CD8-positive, alpha-beta memory T cell (primary cell): ENCODE measurements at regions of chr9 and their contacts with region 1.

Region 1: DNA sequence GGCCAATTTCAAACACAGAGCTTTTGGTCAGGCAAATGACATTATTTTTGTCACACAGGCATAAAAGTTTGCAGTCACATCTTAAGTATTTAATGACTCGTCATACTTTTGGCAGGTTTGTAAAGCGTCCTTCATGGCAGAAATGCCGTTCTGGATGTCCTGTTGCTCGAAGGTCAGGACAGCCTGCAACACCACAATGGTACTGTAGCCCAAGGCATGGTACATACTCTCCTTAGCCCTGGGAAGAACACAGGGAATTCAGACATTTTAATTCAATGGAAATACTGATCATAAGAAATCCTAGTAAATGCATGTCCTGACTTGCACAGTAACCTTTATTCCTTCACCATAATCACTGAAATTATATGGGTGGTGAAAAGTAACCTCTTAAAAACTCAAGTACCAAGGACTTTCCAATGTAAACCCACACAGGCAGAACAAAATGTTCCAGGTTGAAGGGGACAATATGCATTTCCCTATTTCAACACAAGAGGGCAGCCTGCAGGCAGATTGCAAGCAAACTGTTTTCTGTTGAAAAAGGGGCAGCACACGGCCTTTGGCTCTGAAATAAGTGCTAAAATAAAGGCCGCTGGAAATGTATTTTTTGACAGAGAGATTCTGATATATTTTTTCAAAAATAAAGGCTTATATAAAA is 95.7 kb downstream of the TTC39B start:
- DNase-seq: peak; percentile 32 to 65 (median 43)
- H3K4me3 ChIP-seq: no peak overlapping the region
- H3K4me3 Mint-ChIP-seq: no peak overlapping the region
- H3K27ac ChIP-seq: no peak overlapping the region
- H3K27ac Mint-ChIP-seq: no peak overlapping the region
- H3K4me1 ChIP-seq: no peaks in the 10 kb centered on the region
- H3K4me1 Mint-ChIP-seq: peaks cover 7 to 19% (median 16%) of the 10 kb centered on the region in 3 donors
- H3K27me3 ChIP-seq: no peaks in the 10 kb centered on the region
- H3K27me3 Mint-ChIP-seq: no peaks in the 10 kb centered on the region

Region 2: DNA sequence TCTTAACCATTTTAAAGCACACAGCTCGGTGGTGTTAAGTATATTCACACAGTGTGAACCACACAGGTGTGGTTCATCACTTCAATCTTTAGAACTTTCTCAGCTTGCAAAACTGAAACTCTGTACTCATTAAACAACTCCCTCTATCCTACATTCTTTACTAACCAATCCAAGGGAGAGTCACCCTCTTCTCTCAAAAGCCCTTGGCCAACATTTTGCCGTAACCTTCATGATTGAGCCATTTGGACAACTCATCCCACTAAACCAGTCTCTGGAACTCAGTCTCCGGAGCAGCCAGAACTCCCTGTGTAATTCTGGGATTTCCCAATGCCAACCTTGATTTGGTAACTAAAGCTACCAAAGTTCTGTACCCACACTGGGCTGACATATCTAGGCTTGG is 11.0 kb after region 1 on chr9:
- CTCF ChIA-PET with region 1: interaction called, 14 read pairs
- POLR2A ChIA-PET with region 1: no interaction called
- DNase-seq: no peak
- H3K4me3 ChIP-seq: no peak overlapping the region
- H3K4me3 Mint-ChIP-seq: no peak overlapping the region
- H3K27ac ChIP-seq: no peak overlapping the region
- H3K27ac Mint-ChIP-seq: peak overlapping the region in 3 of 8 donors; percentile 3 to 41 (median 39)
- H3K4me1 ChIP-seq: no peaks in the 10 kb centered on the region
- H3K4me1 Mint-ChIP-seq: peaks cover 28 to 47% (median 30%) of the 10 kb centered on the region in 3 donors
- H3K27me3 ChIP-seq: no peaks in the 10 kb centered on the region
- H3K27me3 Mint-ChIP-seq: no peaks in the 10 kb centered on the region

Region 3: GRCh38 chr9:15606643-15607472 is 395.6 kb after region 1 on chr9:
- CTCF ChIA-PET with region 1: interaction called, 14 read pairs
- POLR2A ChIA-PET with region 1: no interaction called
- DNase-seq: peak in 2 of 5 donors; percentile 42 to 53
- H3K4me3 ChIP-seq: no peak overlapping the region
- H3K4me3 Mint-ChIP-seq: no peak overlapping the region
- H3K27ac ChIP-seq: no peak overlapping the region
- H3K27ac Mint-ChIP-seq: no peak overlapping the region
- H3K4me1 ChIP-seq: no peaks in the 10 kb centered on the region
- H3K4me1 Mint-ChIP-seq: no peaks in the 10 kb centered on the region
- H3K27me3 ChIP-seq: no peaks in the 10 kb centered on the region
- H3K27me3 Mint-ChIP-seq: no peaks in the 10 kb centered on the region